ENCODE measurements at regions of chr9 and their contacts with region 1.

Region 1: DNA sequence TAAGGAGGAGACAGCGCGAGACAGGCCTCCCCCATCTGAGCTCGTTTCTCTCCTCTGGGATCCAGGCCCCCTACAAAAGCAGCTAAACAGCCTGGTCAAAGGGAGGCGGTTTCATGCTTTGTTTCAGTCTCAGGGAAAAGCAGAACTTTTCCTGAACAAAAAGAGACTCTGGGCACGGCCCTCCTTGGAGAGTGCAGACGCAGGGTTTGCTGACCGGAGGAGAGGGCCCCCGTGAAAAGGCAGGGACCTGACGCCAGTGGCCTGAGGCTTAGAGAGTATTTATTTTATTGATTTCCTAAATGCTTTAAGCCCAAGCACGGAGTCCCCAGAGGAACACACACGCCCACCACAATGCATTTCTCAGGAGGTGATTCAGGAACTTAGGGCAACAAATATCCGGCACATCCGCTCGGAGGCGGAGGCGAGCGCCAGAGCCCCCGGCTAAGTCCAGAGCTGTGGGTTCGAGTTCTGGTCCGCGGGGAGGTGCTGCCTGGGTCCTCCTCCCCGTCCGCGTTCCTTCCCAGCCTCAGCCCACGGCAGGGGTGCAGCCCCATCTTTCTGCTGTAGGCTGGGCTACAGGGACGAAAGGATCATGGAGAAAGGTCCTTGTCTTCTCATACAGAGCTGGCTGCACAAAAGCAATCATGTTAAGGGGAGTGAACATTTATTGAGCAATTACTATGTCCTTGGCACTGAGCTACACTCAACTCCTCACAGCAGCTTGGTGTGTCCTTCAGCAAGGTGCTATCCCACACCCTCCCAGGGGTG is 40.0 kb downstream of the PTGES start:
- DNase-seq: peak; percentile 41
- H3K4me3 ChIP-seq: peak overlapping the region; percentile 36
- H3K27ac ChIP-seq: peak overlapping the region; percentile 95
- H3K27me3 ChIP-seq: no peaks in the 10 kb centered on the region
- CTCF ChIP-seq: 0 out of 2 replicates have a peak, but pooled peaks have one; percentile 10

Region 2: DNA sequence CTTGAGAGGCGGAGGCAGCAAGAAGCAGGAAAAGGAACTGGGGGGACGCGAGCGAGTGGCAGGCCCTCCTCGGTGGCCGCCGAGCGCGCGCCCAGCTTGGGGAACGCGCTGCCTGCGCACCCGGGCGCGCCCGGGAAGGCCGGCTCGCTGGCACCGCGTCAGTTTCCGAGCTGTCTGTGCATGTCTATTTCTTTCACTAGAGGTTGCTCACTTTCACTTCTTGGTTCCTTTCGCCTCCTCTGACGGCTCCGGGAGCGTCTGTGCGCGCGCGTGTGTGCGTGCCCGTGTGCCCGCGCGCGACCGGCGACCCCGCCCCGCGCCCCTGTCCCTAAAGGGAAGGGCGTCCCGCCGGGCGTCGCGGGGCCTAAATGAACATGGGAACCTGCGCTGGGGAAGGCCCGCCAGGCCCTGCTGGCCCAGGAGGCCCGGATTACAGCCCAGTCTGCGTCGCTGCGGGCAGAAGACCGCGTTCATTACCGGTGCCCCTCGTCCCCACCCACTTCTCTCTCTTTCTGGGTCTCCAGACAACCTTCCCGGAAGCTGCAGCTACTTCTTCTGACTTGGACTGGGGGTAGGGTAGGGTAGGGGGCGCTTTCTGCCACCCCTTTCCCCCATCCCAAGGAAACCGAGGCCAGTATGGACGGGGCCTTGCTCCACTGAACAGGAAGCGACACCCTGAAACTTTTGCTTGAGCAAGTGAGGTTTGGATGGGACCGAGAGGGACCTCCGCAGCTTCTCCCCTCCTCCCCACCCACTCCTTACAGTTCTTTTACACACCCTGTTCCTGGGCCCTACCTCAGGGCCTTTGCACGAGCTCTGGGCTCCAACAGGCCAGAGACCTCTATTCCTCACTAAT is 329.0 kb before region 1 on chr9:
- CTCF ChIA-PET with region 1: no interaction called
- POLR2A ChIA-PET with region 1: no interaction called
- DNase-seq: no peak
- H3K4me3 ChIP-seq: peak overlapping the region; percentile 45
- H3K27ac ChIP-seq: no peak overlapping the region
- H3K27me3 ChIP-seq: no peaks in the 10 kb centered on the region
- CTCF ChIP-seq: no peak; the same call in 1 of the 2 replicates

Region 3: GRCh38 chr9:129460323-129461261 is 252.2 kb before region 1 on chr9:
- CTCF ChIA-PET with region 1: no interaction called
- POLR2A ChIA-PET with region 1: no interaction called
- DNase-seq: peak; percentile 96
- H3K4me3 ChIP-seq: peak overlapping the region; percentile 55
- H3K27ac ChIP-seq: peak overlapping the region; percentile 99
- H3K27me3 ChIP-seq: no peaks in the 10 kb centered on the region
- CTCF ChIP-seq: peak; percentile 27; the same call in 1 of the 2 replicates

Region 4: GRCh38 chr9:129696938-129697650 is 15.7 kb before region 1 on chr9:
- CTCF ChIA-PET with region 1: no interaction called
- POLR2A ChIA-PET with region 1: interaction called, 20 read pairs
- DNase-seq: no peak
- H3K4me3 ChIP-seq: peak overlapping the region; percentile 58
- H3K27ac ChIP-seq: peak overlapping the region; percentile 85
- H3K27me3 ChIP-seq: no peaks in the 10 kb centered on the region
- CTCF ChIP-seq: no peak

Region 5: DNA sequence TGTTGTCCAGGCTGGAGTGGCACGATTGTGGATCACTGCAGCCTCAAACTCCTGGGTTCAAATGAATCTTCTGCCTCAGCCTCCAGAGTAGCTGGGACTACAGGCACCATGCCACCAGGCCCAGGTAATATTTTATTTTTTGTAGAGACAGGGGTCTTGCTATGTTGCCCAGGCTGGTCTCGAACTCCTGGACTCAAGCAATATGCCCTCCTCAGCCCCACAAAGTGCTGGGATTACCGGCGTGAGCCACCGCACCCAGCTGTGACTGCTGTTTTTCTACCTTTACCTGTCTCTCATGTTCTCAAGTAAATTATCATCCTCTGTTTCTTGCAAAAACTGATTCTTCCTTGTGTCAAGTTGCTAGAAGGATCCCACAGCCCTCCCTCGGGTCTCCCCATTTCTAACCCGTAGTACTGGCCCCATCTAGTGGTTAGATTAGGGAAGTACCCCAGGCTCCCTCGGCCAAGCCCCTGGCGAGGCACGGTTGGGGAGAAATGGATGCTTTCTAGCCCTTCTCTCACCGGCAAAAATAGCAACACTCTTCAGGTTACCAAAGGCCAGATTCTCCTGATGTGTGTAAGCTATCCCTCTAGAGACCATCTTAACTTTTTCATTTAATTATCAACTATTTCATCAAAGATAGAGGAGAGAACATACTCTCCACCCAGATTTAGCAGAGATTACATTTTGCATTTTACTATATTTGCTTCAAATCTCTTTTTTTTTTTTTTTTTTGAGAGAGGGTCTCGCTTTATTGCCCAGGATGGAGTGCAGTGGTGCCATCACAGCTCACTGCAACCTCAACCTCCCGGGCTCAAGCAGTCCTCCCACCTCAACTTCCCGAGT is 70.9 kb after region 1 on chr9:
- CTCF ChIA-PET with region 1: no interaction called
- POLR2A ChIA-PET with region 1: no interaction called
- DNase-seq: peak; percentile 57
- H3K4me3 ChIP-seq: no peak overlapping the region
- H3K27ac ChIP-seq: no peak overlapping the region
- H3K27me3 ChIP-seq: peaks cover 4% of the 10 kb centered on the region
- CTCF ChIP-seq: peak; percentile 97

Measured in AG04450 (cell line).